ENCODE measurements at regions of chr17 and their contacts with region 1.

Region 1: GRCh38 chr17:29807520-29808351 is 122.3 kb downstream of the SSH2 start:
- DNase-seq: peak in 4 of 5 donors; percentile 54 to 66 (median 60)
- ATAC-seq: peak in 3 of 4 donors; percentile 64 to 84 (median 72)
- H3K4me3 ChIP-seq: peak overlapping the region in 2 of 12 donors; percentile 18 to 36
- H3K27ac ChIP-seq: peak overlapping the region in 1 of 12 donors; percentile 60
- H3K4me1 ChIP-seq: peaks cover 0 to 4% (median 0%) of the 10 kb centered on the region in 12 donors
- H3K27me3 ChIP-seq: no peaks in the 10 kb centered on the region
- CTCF ChIP-seq: peak; percentile 63 to 88 (median 76)
- POLR2A ChIP-seq: no peak

Region 2: DNA sequence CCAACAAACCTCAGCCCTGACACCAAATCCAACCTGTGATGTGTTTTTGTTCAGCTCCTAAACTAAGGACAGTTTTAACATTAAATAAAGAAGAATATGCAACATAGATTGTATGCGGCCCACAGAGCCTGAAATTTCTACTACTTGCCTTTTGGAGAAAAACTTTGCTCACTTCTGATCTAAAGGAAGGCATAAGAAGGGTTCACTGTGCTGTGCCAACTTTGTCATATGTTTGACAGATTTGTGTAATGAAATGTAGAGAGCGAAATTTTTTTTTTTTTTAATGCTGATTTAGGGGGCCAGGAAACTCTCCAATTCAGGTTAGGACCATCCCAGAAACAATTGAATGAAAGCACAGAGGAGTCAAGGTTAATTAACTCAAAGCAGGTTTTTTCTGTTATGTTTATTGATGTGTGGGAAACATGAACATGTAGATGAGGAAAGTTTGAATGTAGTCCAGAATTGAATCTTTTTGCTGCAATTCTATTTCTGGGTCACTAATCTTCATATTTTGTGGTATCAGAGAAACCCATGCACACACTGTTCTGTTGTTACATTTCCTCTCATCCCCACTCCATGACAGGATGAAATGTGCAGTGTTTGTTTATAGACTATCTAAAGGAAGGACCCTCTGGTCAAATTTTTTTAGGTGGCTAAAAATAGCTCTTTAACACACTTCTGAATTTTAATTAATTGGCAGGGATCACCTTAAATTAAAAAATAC is 346.1 kb before region 1 on chr17:
- intact Hi-C with region 1: no loop called
- DNase-seq: no peak
- ATAC-seq: peak in 1 of 4 donors; percentile 74
- H3K4me3 ChIP-seq: no peak overlapping the region
- H3K27ac ChIP-seq: peak overlapping the region in 1 of 12 donors; percentile 12
- H3K4me1 ChIP-seq: peaks cover 0 to 35% (median 17%) of the 10 kb centered on the region in 12 donors
- H3K27me3 ChIP-seq: no peaks in the 10 kb centered on the region
- CTCF ChIP-seq: no peak
- POLR2A ChIP-seq: no peak

Region 3: GRCh38 chr17:30000001-30000754 is 192.4 kb after region 1 on chr17:
- intact Hi-C with region 1: loop called in 1 of 10 experiments (anchors 10 kb)
- DNase-seq: no peak
- ATAC-seq: no peak
- H3K4me3 ChIP-seq: no peak overlapping the region
- H3K27ac ChIP-seq: no peak overlapping the region
- H3K4me1 ChIP-seq: no peaks in the 10 kb centered on the region
- H3K27me3 ChIP-seq: no peaks in the 10 kb centered on the region
- CTCF ChIP-seq: no peak
- POLR2A ChIP-seq: no peak

Region 4: DNA sequence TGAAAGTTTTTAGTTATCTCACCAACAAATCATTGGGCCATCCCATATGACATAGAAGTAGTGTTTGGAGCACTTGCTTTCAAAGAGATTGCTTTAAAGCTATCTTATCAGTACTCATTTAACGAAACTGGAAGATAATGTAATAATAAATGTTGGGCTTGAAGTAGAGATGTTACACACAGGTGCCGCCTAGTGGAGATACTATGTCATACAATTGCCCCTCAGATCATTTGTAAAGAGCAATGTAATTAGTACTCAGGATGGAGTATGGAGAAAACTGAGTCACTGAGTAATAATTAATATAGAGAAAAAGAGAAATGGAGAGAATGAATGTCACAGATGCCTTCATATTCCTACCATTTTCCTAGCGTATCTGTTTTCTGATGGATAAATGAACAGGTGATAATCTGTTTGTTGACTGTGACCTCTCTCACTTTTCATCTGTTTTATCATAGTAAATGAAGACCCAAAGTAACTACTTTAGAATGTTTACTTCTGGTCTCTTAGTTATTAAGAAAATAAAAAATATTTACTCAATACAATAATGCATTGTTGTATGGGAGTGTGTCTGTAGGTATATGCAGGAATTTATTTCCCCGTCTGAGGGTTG is 214.1 kb after region 1 on chr17:
- intact Hi-C with region 1: loop called in 9 of 10 experiments (anchors 2 to 10 kb)
- DNase-seq: peak in 1 of 5 donors; percentile 9
- ATAC-seq: no peak
- H3K4me3 ChIP-seq: no peak overlapping the region
- H3K27ac ChIP-seq: no peak overlapping the region
- H3K4me1 ChIP-seq: peaks cover 0 to 3% (median 0%) of the 10 kb centered on the region in 12 donors
- H3K27me3 ChIP-seq: peaks cover 0 to 5% (median 0%) of the 10 kb centered on the region in 9 donors
- CTCF ChIP-seq: peak; percentile 60 to 80 (median 76)
- POLR2A ChIP-seq: no peak

Region 5: GRCh38 chr17:30031214-30031869 is 223.6 kb after region 1 on chr17:
- intact Hi-C with region 1: loop called in 2 of 10 experiments (anchors 10 kb)
- DNase-seq: no peak
- ATAC-seq: no peak
- H3K4me3 ChIP-seq: no peak overlapping the region
- H3K27ac ChIP-seq: no peak overlapping the region
- H3K4me1 ChIP-seq: no peaks in the 10 kb centered on the region
- H3K27me3 ChIP-seq: no peaks in the 10 kb centered on the region
- CTCF ChIP-seq: no peak
- POLR2A ChIP-seq: no peak

Measured in heart left ventricle (tissue), 16 donors.